Naive thymus-derived CD4-positive, alpha-beta T cell (primary cell): ENCODE measurements at regions of chr18 and their contacts with region 1.

Region 1: GRCh38 chr18:75070625-75071483 is 138.1 kb downstream of the PTGR3 start:
- DNase-seq: peak; percentile 26 to 75 (median 71)
- ATAC-seq: peak; percentile 85
- H3K4me3 ChIP-seq: peak overlapping the region; percentile 46
- H3K4me3 Mint-ChIP-seq: peak overlapping the region; percentile 82 to 95 (median 87)
- H3K27ac ChIP-seq: peak overlapping the region; percentile 67
- H3K27ac Mint-ChIP-seq: peak overlapping the region; percentile 91 to 99 (median 97)
- H3K4me1 ChIP-seq: peaks cover 28 to 30% of the 10 kb centered on the region in 2 donors
- H3K4me1 Mint-ChIP-seq: peaks cover 29 to 57% (median 39%) of the 10 kb centered on the region in 7 donors
- H3K27me3 ChIP-seq: no peaks in the 10 kb centered on the region
- H3K27me3 Mint-ChIP-seq: no peaks in the 10 kb centered on the region

Region 2: GRCh38 chr18:74147779-74148542 is 922.9 kb before region 1 on chr18 and contains the starts of genes FBXO15 and TIMM21:
- CTCF ChIA-PET with region 1: no interaction called
- POLR2A ChIA-PET with region 1: no interaction called
- intact Hi-C with region 1: loop called in 1 of 2 experiments (anchors 5 kb)
- DNase-seq: peak; percentile 92 to 97 (median 96)
- ATAC-seq: peak; percentile 91
- H3K4me3 ChIP-seq: peak within 1 kb of the TSS; percentile 82
- H3K4me3 Mint-ChIP-seq: peak within 1 kb of the TSS; percentile 95 to 100 (median 97)
- H3K27ac ChIP-seq: peak within 1 kb of the TSS; percentile 92
- H3K27ac Mint-ChIP-seq: peak within 1 kb of the TSS; percentile 98 to 100 (median 99)
- H3K4me1 ChIP-seq: peaks cover 15 to 25% of the 10 kb centered on the region in 2 donors
- H3K4me1 Mint-ChIP-seq: peaks cover 23 to 60% (median 55%) of the 10 kb centered on the region in 7 donors
- H3K27me3 ChIP-seq: no peaks in the 10 kb centered on the region
- H3K27me3 Mint-ChIP-seq: peaks cover 0 to 7% (median 0%) of the 10 kb centered on the region in 5 donors
- total RNA-seq, gene FBXO15: 1.1 to 4.9 (median 1.3) TPM
- total RNA-seq, gene TIMM21: 9.7 to 30.2 (median 27.9) TPM

Region 3: GRCh38 chr18:74597662-74598349 is 473.0 kb before region 1 on chr18 and contains the start of gene ZNF407:
- CTCF ChIA-PET with region 1: no interaction called
- POLR2A ChIA-PET with region 1: interaction called, 4 read pairs
- intact Hi-C with region 1: loop called (anchors 1 to 2 kb)
- DNase-seq: peak; percentile 77 to 94 (median 90)
- ATAC-seq: peak; percentile 84
- H3K4me3 ChIP-seq: peak within 1 kb of the TSS; percentile 100
- H3K4me3 Mint-ChIP-seq: peak within 1 kb of the TSS; percentile 89 to 96 (median 95)
- H3K27ac ChIP-seq: peak within 1 kb of the TSS; percentile 88
- H3K27ac Mint-ChIP-seq: peak within 1 kb of the TSS; percentile 95 to 99 (median 98)
- H3K4me1 ChIP-seq: peaks cover 26 to 27% of the 10 kb centered on the region in 2 donors
- H3K4me1 Mint-ChIP-seq: peaks cover 33 to 74% (median 61%) of the 10 kb centered on the region in 7 donors
- H3K27me3 ChIP-seq: no peaks in the 10 kb centered on the region
- H3K27me3 Mint-ChIP-seq: no peaks in the 10 kb centered on the region
- total RNA-seq, gene ZNF407: 23.1 to 31.3 (median 29.7) TPM

Region 4: DNA sequence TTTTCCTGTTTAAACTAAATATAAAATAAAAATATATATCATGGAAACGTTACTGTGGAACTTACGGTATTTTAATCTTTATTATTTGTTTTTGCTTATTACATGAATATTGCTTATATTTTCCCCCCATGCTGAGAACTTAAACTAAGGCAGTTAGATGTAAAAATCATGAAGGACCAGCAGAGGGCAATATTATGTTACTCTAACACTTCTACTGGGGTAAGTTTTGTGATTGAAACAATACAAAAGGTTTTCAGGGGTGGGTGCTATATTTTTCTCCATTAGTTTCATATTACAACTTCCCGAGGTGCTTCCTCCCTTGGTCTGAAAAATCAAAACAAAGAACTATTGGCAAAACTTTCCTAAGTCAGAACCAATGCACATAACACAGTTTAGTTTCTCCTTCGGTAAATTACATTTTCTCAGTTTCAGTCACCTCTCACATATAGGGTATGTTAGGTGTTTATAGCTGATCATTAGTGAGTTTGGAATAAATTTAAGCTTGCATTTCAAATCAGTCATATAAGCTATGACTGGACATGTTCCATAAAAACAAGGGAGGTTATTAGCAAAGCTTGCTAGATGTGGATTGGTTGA is 418.4 kb before region 1 on chr18:
- CTCF ChIA-PET with region 1: no interaction called
- POLR2A ChIA-PET with region 1: no interaction called
- intact Hi-C with region 1: loop called in 1 of 2 experiments (anchors 5 kb)
- DNase-seq: peak in 7 of 9 donors; percentile 7 to 48 (median 36)
- ATAC-seq: no peak
- H3K4me3 ChIP-seq: no peak overlapping the region
- H3K4me3 Mint-ChIP-seq: no peak overlapping the region
- H3K27ac ChIP-seq: no peak overlapping the region
- H3K27ac Mint-ChIP-seq: no peak overlapping the region
- H3K4me1 ChIP-seq: no peaks in the 10 kb centered on the region
- H3K4me1 Mint-ChIP-seq: peaks cover 0 to 17% (median 5%) of the 10 kb centered on the region in 7 donors
- H3K27me3 ChIP-seq: no peaks in the 10 kb centered on the region
- H3K27me3 Mint-ChIP-seq: no peaks in the 10 kb centered on the region

Region 5: GRCh38 chr18:74942319-74942910 is 128.4 kb before region 1 on chr18:
- CTCF ChIA-PET with region 1: no interaction called
- POLR2A ChIA-PET with region 1: no interaction called
- intact Hi-C with region 1: loop called in 1 of 2 experiments (anchors 5 kb)
- DNase-seq: peak in 5 of 9 donors; percentile 12 to 38 (median 15)
- ATAC-seq: peak; percentile 83
- H3K4me3 ChIP-seq: no peak overlapping the region
- H3K4me3 Mint-ChIP-seq: peak overlapping the region in 9 of 10 donors; percentile 47 to 75 (median 68)
- H3K27ac ChIP-seq: peak overlapping the region; percentile 31
- H3K27ac Mint-ChIP-seq: peak overlapping the region; percentile 15 to 91 (median 83)
- H3K4me1 ChIP-seq: peaks cover 0 to 9% of the 10 kb centered on the region in 2 donors
- H3K4me1 Mint-ChIP-seq: peaks cover 6 to 33% (median 25%) of the 10 kb centered on the region in 7 donors
- H3K27me3 ChIP-seq: no peaks in the 10 kb centered on the region
- H3K27me3 Mint-ChIP-seq: peaks cover 0 to 3% (median 0%) of the 10 kb centered on the region in 5 donors

Region 6: GRCh38 chr18:74994502-74995419 is 76.1 kb before region 1 on chr18:
- CTCF ChIA-PET with region 1: interaction called, 3 read pairs
- POLR2A ChIA-PET with region 1: interaction called, 4 read pairs
- intact Hi-C with region 1: loop called in 1 of 2 experiments (anchors 5 kb)
- DNase-seq: peak in 1 of 9 donors; percentile 24
- ATAC-seq: peak; percentile 72
- H3K4me3 ChIP-seq: peak overlapping the region; percentile 29
- H3K4me3 Mint-ChIP-seq: peak overlapping the region in 7 of 10 donors; percentile 1 to 79 (median 44)
- H3K27ac ChIP-seq: no peak overlapping the region
- H3K27ac Mint-ChIP-seq: peak overlapping the region in 8 of 9 donors; percentile 21 to 87 (median 69)
- H3K4me1 ChIP-seq: peaks cover 10 to 55% of the 10 kb centered on the region in 2 donors
- H3K4me1 Mint-ChIP-seq: peaks cover 27 to 54% (median 40%) of the 10 kb centered on the region in 7 donors
- H3K27me3 ChIP-seq: no peaks in the 10 kb centered on the region
- H3K27me3 Mint-ChIP-seq: no peaks in the 10 kb centered on the region

Region 7: GRCh38 chr18:75016025-75016717 is 54.7 kb before region 1 on chr18:
- CTCF ChIA-PET with region 1: no interaction called
- POLR2A ChIA-PET with region 1: no interaction called
- intact Hi-C with region 1: no loop called
- DNase-seq: no peak
- ATAC-seq: no peak
- H3K4me3 ChIP-seq: no peak overlapping the region
- H3K4me3 Mint-ChIP-seq: no peak overlapping the region
- H3K27ac ChIP-seq: no peak overlapping the region
- H3K27ac Mint-ChIP-seq: no peak overlapping the region
- H3K4me1 ChIP-seq: peaks cover 0 to 3% of the 10 kb centered on the region in 2 donors
- H3K4me1 Mint-ChIP-seq: peaks cover 0 to 12% (median 3%) of the 10 kb centered on the region in 7 donors
- H3K27me3 ChIP-seq: no peaks in the 10 kb centered on the region
- H3K27me3 Mint-ChIP-seq: no peaks in the 10 kb centered on the region

Region 8: DNA sequence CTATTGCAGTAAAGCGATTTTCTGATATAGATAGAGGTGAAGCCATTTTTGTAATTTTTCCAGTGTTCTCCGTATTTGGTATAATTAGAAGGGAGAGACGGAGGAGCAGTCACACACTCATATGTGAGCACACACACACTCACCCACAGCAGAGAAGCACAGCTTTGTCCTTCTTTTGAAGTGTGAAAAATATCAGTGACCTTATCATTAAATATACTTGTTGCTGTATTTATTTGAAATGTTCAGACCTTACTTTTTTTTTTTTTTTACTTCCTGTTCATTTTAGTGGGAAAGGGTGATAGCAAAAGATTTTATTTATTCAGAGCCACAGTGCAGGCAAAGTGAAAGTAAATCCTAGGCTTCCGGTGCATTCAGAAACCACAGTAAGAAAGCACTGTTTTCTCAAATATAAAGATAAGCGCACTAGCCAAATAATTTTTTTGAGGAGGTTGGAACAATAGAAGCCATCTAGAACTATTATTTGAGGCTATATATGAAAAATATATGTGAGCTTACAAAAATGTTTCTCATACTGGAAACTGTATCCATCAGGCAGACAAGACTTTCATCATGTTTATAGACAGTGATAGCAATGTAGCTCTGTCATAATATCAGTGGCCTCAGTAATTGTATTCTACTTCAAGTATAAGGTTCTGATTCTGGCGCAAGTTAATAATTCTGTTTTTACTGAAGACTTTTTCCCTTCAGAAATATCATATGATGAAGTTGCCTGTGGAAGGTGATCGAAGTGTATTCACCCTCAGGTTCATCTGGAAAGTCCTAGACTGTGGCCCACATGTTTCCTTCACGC is 177.0 kb after region 1 on chr18:
- CTCF ChIA-PET with region 1: no interaction called
- POLR2A ChIA-PET with region 1: interaction called, 7 read pairs
- intact Hi-C with region 1: loop called (anchors 2 kb)
- DNase-seq: peak in 7 of 9 donors; percentile 43 to 66 (median 58)
- ATAC-seq: peak; percentile 62
- H3K4me3 ChIP-seq: peak overlapping the region; percentile 43
- H3K4me3 Mint-ChIP-seq: peak overlapping the region; percentile 86 to 93 (median 90)
- H3K27ac ChIP-seq: peak overlapping the region; percentile 82
- H3K27ac Mint-ChIP-seq: peak overlapping the region; percentile 91 to 99 (median 96)
- H3K4me1 ChIP-seq: peaks cover 31 to 43% of the 10 kb centered on the region in 2 donors
- H3K4me1 Mint-ChIP-seq: peaks cover 44 to 94% (median 87%) of the 10 kb centered on the region in 7 donors
- H3K27me3 ChIP-seq: no peaks in the 10 kb centered on the region
- H3K27me3 Mint-ChIP-seq: no peaks in the 10 kb centered on the region